HepG2 (cell line): ENCODE measurements at regions of chr17 and their contacts with region 1.

Region 1: GRCh38 chr17:38735161-38735997 is 5.2 kb downstream of the CISD3 start:
- DNase-seq: peak; percentile 33
- ATAC-seq: no peak
- H3K4me3 ChIP-seq: no peak overlapping the region; a peak in 1 of 6 replicates
- H3K27ac ChIP-seq: peak overlapping the region; percentile 7
- H3K4me1 ChIP-seq: peaks cover 45% of the 10 kb centered on the region
- H3K27me3 ChIP-seq: no peaks in the 10 kb centered on the region
- CTCF ChIP-seq: peak; percentile 99
- EP300 ChIP-seq: no peak; a peak in 1 of 4 replicates
- POLR2A ChIP-seq: peak in 1 of 2 experiments; percentile 66; a peak in 3 of 4 replicates
- RAD21 ChIP-seq: peak; percentile 90

Region 2: DNA sequence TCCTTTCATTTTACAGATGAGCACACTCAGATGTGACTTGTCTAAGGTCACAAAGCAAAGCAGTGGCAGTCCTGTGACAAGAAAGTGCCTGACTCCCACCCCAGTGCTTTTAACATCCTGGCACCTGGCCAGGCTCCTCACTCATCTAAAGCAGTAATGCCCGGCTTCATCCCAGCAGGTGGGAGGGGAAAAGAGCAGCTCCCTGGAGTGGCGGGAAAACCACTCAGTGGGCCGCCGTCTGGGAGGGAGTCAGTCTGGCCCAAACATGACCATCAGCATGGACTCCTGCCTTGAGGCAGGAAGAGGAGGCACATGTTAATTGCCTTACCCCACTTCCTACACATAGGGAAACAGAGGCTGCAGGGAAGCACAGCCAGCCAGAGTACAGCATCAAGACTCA is 10.2 kb after region 1 on chr17:
- CTCF ChIA-PET with region 1: interaction called, 6 read pairs
- POLR2A ChIA-PET with region 1: interaction called, 39 read pairs
- in situ Hi-C with region 1: no loop called
- intact Hi-C with region 1: loop called (anchors 2 kb)
- DNase-seq: peak; percentile 29
- ATAC-seq: no peak
- H3K4me3 ChIP-seq: peak overlapping the region in 2 of 3 experiments; percentile 21 to 84; a peak in 3 of 6 replicates
- H3K27ac ChIP-seq: peak overlapping the region; percentile 84
- H3K4me1 ChIP-seq: peaks cover 64% of the 10 kb centered on the region
- H3K27me3 ChIP-seq: no peaks in the 10 kb centered on the region
- CTCF ChIP-seq: no peak
- EP300 ChIP-seq: no peak
- POLR2A ChIP-seq: no peak
- RAD21 ChIP-seq: no peak

Region 3: GRCh38 chr17:38791162-38791561 is 55.8 kb after region 1 on chr17:
- CTCF ChIA-PET with region 1: no interaction called
- POLR2A ChIA-PET with region 1: no interaction called
- in situ Hi-C with region 1: no loop called
- intact Hi-C with region 1: no loop called
- DNase-seq: no peak
- ATAC-seq: no peak
- H3K4me3 ChIP-seq: no peak overlapping the region
- H3K27ac ChIP-seq: no peak overlapping the region
- H3K4me1 ChIP-seq: peaks cover 9% of the 10 kb centered on the region
- H3K27me3 ChIP-seq: no peaks in the 10 kb centered on the region
- CTCF ChIP-seq: no peak
- EP300 ChIP-seq: no peak
- POLR2A ChIP-seq: no peak
- RAD21 ChIP-seq: no peak